CD8-positive, alpha-beta T cell (primary cell): ENCODE measurements at regions of chr6 and their contacts with region 1.

Region 1: GRCh38 chr6:149065658-149066556 is 251.6 kb upstream of the TAB2 start:
- DNase-seq: peak in 8 of 9 experiments; percentile 11 to 90 (median 54)
- ATAC-seq: peak; percentile 96
- H3K4me3 ChIP-seq: peak overlapping the region in 1 of 2 experiments; percentile 5
- H3K4me3 Mint-ChIP-seq: peak overlapping the region; percentile 44
- H3K27ac ChIP-seq: peak overlapping the region; percentile 51 to 62
- H3K27ac Mint-ChIP-seq: peak overlapping the region; percentile 96
- H3K4me1 ChIP-seq: peaks cover 24% of the 10 kb centered on the region
- H3K4me1 Mint-ChIP-seq: peaks cover 27% of the 10 kb centered on the region
- H3K27me3 ChIP-seq: no peaks in the 10 kb centered on the region
- H3K27me3 Mint-ChIP-seq: no peaks in the 10 kb centered on the region
- CTCF ChIP-seq: no peak

Region 2: GRCh38 chr6:149045404-149045803 is 20.5 kb before region 1 on chr6:
- CTCF ChIA-PET with region 1: interaction called, 14 read pairs
- POLR2A ChIA-PET with region 1: interaction called, 9 read pairs
- intact Hi-C with region 1: no loop called
- DNase-seq: peak in 3 of 9 experiments; percentile 24 to 50 (median 33)
- ATAC-seq: peak; percentile 84
- H3K4me3 ChIP-seq: no peak overlapping the region
- H3K4me3 Mint-ChIP-seq: no peak overlapping the region
- H3K27ac ChIP-seq: no peak overlapping the region
- H3K27ac Mint-ChIP-seq: no peak overlapping the region
- H3K4me1 ChIP-seq: peaks cover 30% of the 10 kb centered on the region
- H3K4me1 Mint-ChIP-seq: peaks cover 31% of the 10 kb centered on the region
- H3K27me3 ChIP-seq: no peaks in the 10 kb centered on the region
- H3K27me3 Mint-ChIP-seq: no peaks in the 10 kb centered on the region
- CTCF ChIP-seq: no peak

Region 3: GRCh38 chr6:149170564-149171452 is 104.9 kb after region 1 on chr6:
- CTCF ChIA-PET with region 1: no interaction called
- POLR2A ChIA-PET with region 1: no interaction called
- intact Hi-C with region 1: no loop called
- DNase-seq: peak in 1 of 9 experiments; percentile 37
- ATAC-seq: no peak
- H3K4me3 ChIP-seq: no peak overlapping the region
- H3K4me3 Mint-ChIP-seq: peak overlapping the region; percentile 9
- H3K27ac ChIP-seq: no peak overlapping the region
- H3K27ac Mint-ChIP-seq: no peak overlapping the region
- H3K4me1 ChIP-seq: peaks cover 27% of the 10 kb centered on the region
- H3K4me1 Mint-ChIP-seq: peaks cover 47% of the 10 kb centered on the region
- H3K27me3 ChIP-seq: no peaks in the 10 kb centered on the region
- H3K27me3 Mint-ChIP-seq: no peaks in the 10 kb centered on the region
- CTCF ChIP-seq: no peak